ENCODE measurements at regions of chr16 and their contacts with region 1.

Region 1: GRCh38 chr16:63473725-63474124 is 1437.5 kb upstream of the CDH8 start:
- DNase-seq: no peak
- ATAC-seq: no peak
- H3K4me3 ChIP-seq: no peak overlapping the region
- H3K27ac ChIP-seq: no peak overlapping the region
- H3K4me1 ChIP-seq: no peaks in the 10 kb centered on the region
- H3K27me3 ChIP-seq: no peaks in the 10 kb centered on the region
- CTCF ChIP-seq: no peak
- EP300 ChIP-seq: no peak
- POLR2A ChIP-seq: no peak
- RAD21 ChIP-seq: no peak

Region 2: DNA sequence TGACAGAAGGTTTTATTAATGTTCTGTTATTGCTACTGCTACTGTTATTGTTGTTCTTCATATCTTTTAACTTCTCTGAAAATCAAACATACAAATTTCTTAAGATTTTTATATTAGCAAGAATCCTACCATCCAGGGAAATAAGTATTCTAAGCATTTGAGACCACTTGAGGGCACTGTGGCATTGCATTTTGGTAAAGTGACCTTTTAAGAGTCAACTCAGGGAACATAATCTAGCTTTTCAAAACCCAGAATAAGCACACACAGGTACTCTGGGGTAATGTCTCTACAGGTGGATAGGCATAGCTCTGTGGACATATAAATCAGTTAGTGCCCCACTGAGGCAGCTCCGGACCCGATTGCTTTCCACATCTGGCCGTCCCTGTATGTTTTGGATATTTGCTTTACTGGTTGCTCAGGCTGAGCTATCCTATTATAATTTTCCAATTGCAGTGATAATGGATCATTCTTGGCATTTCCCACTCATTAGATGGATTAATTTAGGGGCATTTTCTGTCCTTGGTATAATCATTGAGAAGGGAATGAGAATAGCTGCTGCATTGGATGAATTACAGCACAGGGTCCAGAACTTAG is 12.4 kb before region 1 on chr16:
- CTCF ChIA-PET with region 1: interaction called, 10 read pairs
- POLR2A ChIA-PET with region 1: no interaction called
- RAD21 ChIA-PET with region 1: interaction called, 3 read pairs
- SMC1A ChIA-PET with region 1: interaction called, 4 read pairs
- in situ Hi-C with region 1: no loop called
- intact Hi-C with region 1: no loop called
- DNase-seq: no peak
- ATAC-seq: 0 out of 3 replicates have a peak, but pooled peaks have one; percentile 29
- H3K4me3 ChIP-seq: no peak overlapping the region
- H3K27ac ChIP-seq: no peak overlapping the region
- H3K4me1 ChIP-seq: no peaks in the 10 kb centered on the region
- H3K27me3 ChIP-seq: no peaks in the 10 kb centered on the region
- CTCF ChIP-seq: no peak; a peak in 1 of 6 replicates
- EP300 ChIP-seq: no peak
- POLR2A ChIP-seq: no peak
- RAD21 ChIP-seq: peak; percentile 34; the same call in 1 of the 2 replicates